AG04449 (cell line): ENCODE measurements at regions of chr12 and their contacts with region 1.

Region 1: GRCh38 chr12:51217968-51218606 is at the start of gene POU6F1:
- DNase-seq: no peak
- H3K4me3 ChIP-seq: peak within 1 kb of the TSS; percentile 77
- CTCF ChIP-seq: peak; percentile 68

Region 2: GRCh38 chr12:51083126-51083833 is 134.8 kb before region 1 on chr12 and contains the start of gene CSRNP2:
- CTCF ChIA-PET with region 1: no interaction called
- POLR2A ChIA-PET with region 1: interaction called, 15 read pairs
- DNase-seq: peak; percentile 64
- H3K4me3 ChIP-seq: peak within 1 kb of the TSS; percentile 86
- CTCF ChIP-seq: no peak

Region 3: GRCh38 chr12:51160814-51161459 is 57.1 kb before region 1 on chr12:
- CTCF ChIA-PET with region 1: no interaction called
- POLR2A ChIA-PET with region 1: no interaction called
- DNase-seq: no peak
- H3K4me3 ChIP-seq: no peak overlapping the region
- CTCF ChIP-seq: no peak

Region 4: DNA sequence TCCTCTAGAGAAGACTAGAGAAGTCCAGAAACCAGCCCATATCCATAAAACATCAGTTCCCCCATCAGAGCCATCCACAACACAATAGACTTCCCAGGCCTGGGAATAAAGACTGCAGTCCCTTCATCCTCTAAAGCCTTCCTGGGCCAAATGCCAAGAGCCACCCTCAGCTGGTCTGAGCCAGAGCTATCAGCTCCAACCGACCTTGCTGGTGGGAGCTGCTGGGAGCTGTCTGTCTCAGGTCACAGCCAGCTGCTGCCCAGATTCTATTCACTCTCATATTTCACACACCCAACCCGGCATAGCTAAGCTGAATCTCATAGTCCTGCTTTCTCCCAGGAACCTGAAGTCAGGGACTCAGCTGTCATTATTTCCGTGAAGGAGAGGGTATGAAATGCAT is 34.3 kb before region 1 on chr12:
- CTCF ChIA-PET with region 1: no interaction called
- POLR2A ChIA-PET with region 1: no interaction called
- DNase-seq: no peak
- H3K4me3 ChIP-seq: no peak overlapping the region
- CTCF ChIP-seq: no peak

Region 5: GRCh38 chr12:51229116-51229809 is 11.2 kb after region 1 on chr12:
- CTCF ChIA-PET with region 1: interaction called, 10 read pairs
- POLR2A ChIA-PET with region 1: interaction called, 4 read pairs
- DNase-seq: no peak
- H3K4me3 ChIP-seq: no peak overlapping the region
- CTCF ChIP-seq: no peak

Region 6: DNA sequence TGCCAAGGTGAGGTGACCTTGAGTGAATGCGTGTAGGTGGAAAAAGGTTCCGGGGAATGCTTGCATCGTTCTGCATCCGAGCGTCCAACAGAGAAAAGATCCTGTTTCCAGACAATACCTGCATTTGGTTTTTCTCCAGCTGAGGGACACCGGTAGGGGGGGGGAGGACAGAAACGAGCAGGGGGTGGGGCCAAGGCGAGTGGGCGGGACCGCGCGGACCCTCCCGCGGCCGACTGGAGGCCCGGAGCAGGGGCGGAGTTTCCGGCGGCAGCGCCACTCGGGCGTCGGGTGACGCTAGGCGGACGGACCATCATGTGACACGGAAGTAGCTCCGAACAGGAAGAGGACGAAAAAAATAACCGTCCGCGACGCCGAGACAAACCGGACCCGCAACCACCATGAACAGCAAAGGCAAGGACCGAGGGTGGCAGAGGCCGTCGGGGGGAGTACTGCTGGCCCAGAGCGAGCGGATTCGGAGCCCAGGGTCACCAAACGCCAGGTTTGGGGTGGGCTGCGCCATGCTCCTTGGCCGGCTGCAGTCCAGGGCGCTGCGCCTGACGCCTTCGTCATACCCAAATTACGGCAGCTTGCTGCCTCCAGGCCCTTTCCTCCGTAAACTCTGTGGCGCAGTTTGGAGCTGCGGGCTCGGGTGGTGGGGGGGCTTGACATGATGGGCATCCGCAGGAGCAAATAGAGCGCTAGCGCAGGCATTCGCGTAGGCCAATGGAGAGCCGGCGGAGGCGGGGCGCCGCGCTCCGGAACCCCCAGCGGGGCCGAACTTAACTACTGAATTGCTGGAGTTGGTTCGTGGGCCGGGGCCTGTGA is 20.6 kb after region 1 on chr12 and contains the start of gene DAZAP2:
- CTCF ChIA-PET with region 1: interaction called, 3 read pairs
- POLR2A ChIA-PET with region 1: interaction called, 11 read pairs
- DNase-seq: peak; percentile 54
- H3K4me3 ChIP-seq: peak within 1 kb of the TSS; percentile 100
- CTCF ChIP-seq: peak; percentile 13